A673 (cell line): ENCODE measurements at regions of chr12 and their contacts with region 1.

Region 1: DNA sequence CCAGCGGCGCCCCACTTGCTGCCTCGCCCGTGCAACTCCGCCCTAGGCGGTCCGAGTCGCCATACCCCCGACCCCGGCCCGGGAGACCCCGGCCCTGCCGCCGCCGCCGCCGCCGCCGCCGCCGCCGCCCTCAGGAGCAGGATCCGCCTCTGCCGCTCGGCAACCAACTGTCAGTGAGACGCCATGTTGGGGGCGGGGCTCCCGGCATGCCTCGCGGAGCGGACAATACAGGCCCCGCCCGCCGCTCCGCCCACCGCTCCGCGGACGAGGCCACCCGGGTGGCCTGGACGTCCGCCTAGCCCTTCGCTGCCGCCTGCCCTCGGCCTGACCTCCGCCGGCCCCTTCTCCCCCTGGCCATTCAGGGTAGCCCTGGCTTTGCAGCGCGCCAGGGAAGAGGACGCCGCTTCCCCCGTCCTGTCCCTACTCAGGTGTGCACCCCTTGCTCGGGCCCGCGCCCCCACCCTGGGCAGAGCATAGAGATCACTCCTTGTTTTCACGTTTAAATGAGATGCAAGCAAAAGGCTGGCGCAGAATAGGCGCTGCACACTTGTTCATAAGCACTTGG is at the start of gene HECTD4:
- DNase-seq: peak; percentile 94
- H3K4me3 ChIP-seq: peak within 1 kb of the TSS; percentile 98
- H3K27ac ChIP-seq: peak within 1 kb of the TSS; percentile 84
- H3K4me1 ChIP-seq: peaks cover 15% of the 10 kb centered on the region
- H3K27me3 ChIP-seq: no peaks in the 10 kb centered on the region
- CTCF ChIP-seq: no peak
- total RNA-seq, gene HECTD4: 45.3 and 52.1 TPM in 2 replicates

Region 2: DNA sequence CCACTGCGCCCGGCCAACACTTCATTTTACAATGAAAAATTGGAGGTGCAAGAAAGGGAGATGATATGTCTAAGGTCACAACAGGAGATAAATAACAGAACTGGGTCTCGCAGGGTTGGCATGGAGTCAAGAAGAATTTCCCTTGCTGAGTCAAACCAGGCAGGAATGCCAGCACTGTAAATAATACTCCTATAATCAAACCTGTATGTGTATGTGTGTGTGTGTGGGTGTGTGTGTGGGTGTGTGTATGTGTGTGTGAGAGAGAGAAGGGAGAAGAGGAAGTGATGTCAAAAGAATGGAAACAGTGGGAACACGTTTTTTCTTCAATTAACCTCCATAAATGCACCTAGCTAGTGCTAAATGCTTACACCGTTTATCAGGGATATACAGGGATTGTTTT is 439.8 kb before region 1 on chr12:
- CTCF ChIA-PET with region 1: interaction called, 11 read pairs
- POLR2A ChIA-PET with region 1: no interaction called
- intact Hi-C with region 1: no loop called
- DNase-seq: no peak
- H3K4me3 ChIP-seq: no peak overlapping the region
- H3K27ac ChIP-seq: no peak overlapping the region
- H3K4me1 ChIP-seq: no peaks in the 10 kb centered on the region
- H3K27me3 ChIP-seq: no peaks in the 10 kb centered on the region
- CTCF ChIP-seq: no peak

Region 3: DNA sequence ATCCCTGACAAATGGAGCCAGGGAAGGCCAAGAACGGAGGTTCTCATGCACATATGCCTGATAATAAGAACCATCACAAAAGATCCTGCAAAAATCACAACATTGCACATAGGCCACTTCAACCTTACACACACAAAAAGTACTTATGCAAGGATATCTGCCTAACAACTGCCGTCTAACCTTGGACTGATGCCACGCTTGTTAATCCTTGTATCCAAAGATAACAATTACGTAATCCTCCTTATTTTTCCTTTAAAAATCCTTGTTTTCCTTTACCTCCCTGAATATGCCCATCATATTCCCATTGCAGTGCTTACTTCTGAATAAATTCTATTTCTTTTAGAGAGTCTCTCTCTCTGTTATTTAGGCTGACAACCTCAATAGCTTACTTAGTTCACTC is 428.9 kb before region 1 on chr12:
- CTCF ChIA-PET with region 1: no interaction called
- POLR2A ChIA-PET with region 1: no interaction called
- intact Hi-C with region 1: loop called (anchors 5 kb)
- DNase-seq: no peak
- H3K4me3 ChIP-seq: no peak overlapping the region
- H3K27ac ChIP-seq: no peak overlapping the region
- H3K4me1 ChIP-seq: no peaks in the 10 kb centered on the region
- H3K27me3 ChIP-seq: no peaks in the 10 kb centered on the region
- CTCF ChIP-seq: no peak

Region 4: GRCh38 chr12:112012775-112013600 is 369.3 kb before region 1 on chr12 and contains the starts of genes ERP29 and TMEM116:
- CTCF ChIA-PET with region 1: no interaction called
- POLR2A ChIA-PET with region 1: no interaction called
- intact Hi-C with region 1: loop called (anchors 10 kb)
- DNase-seq: peak; percentile 99
- H3K4me3 ChIP-seq: peak within 1 kb of the TSS; percentile 82
- H3K27ac ChIP-seq: peak within 1 kb of the TSS; percentile 96
- H3K4me1 ChIP-seq: peaks cover 16% of the 10 kb centered on the region
- H3K27me3 ChIP-seq: no peaks in the 10 kb centered on the region
- CTCF ChIP-seq: peak; percentile 55
- total RNA-seq, gene ERP29: 109 and 116 TPM in 2 replicates
- total RNA-seq, gene TMEM116: 12.0 and 13.6 TPM in 2 replicates

Region 5: DNA sequence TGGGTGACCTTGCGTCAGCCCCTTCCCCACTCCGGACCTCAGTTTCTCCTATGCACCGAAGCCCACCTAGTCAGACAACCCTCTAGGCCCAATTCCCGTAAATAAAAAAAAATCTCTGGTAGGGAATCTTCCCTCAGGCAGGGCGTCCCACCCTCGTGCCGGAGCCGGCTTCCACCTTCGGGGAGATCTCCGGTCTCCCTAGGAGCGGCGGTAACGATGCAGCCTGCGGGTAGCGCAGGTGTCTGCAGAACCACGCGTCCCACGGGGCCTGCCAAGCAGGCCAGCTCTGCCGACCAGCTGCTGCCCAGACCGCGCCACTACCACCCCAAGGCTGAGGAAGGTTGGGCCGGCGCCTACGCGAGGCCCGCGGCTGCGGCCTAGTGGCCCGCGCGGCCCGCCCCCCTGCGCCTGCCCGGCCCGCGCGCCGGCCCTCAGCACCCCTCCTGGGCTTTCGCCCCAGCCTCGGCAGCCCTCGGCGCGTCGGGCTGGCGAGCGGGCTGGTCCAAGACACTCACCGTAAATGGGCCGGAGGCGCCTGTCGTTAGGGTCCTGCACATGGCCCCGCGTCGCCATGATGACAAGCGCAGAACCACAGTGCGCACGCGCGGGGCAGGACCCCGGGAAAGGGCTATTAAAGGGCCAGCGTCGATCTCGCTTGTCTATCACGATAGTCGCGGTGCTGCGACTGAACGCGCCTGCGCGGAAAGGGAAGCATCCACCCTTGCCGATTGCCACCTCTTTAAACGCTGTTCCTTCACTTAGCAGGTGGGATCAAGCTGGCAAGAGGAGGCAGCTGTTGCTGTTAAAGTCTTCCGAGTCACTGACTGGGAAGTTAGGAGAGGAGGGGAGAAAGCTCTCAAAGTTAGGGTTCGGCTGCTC is 273.9 kb before region 1 on chr12 and contains the start of gene NAA25:
- CTCF ChIA-PET with region 1: no interaction called
- POLR2A ChIA-PET with region 1: interaction called, 10 read pairs
- intact Hi-C with region 1: loop called (anchors 5 kb)
- DNase-seq: peak; percentile 91
- H3K4me3 ChIP-seq: peak within 1 kb of the TSS; percentile 94
- H3K27ac ChIP-seq: peak within 1 kb of the TSS; percentile 96
- H3K4me1 ChIP-seq: peaks cover 24% of the 10 kb centered on the region
- H3K27me3 ChIP-seq: no peaks in the 10 kb centered on the region
- CTCF ChIP-seq: no peak
- total RNA-seq, gene NAA25: 67.4 and 70.5 TPM in 2 replicates

Region 6: DNA sequence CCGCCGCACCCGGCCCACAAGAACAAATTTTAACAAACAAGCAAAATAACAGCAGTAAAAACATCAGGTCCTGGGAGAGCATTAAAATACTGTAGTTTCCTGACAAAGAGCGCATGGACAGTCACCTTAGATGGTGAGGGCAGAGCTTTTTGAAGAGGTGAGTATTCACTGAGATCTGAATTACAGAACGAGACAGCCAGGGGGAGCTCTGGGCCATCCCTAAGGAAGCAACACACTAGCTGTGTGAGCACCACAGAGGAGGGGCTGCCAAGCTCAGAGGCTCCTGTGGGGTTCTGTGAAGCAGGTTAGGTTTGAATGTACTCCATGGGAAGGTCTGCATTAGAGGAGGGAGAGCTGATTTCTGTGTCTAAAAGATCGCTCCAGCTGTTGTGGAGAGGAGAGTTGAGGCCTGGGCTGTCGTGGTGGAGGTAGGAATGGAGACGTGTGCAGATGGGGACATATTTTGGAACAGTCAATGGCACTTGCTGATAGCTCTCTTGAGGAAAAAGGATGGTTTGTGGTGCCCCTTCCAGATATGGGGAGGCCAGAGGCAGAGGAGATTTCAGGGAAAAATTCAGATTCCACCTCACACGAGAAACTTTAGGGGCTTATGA is 184.1 kb before region 1 on chr12:
- CTCF ChIA-PET with region 1: interaction called, 33 read pairs
- POLR2A ChIA-PET with region 1: no interaction called
- intact Hi-C with region 1: loop called (anchors 1 kb)
- DNase-seq: peak; percentile 76
- H3K4me3 ChIP-seq: no peak overlapping the region
- H3K27ac ChIP-seq: no peak overlapping the region
- H3K4me1 ChIP-seq: no peaks in the 10 kb centered on the region
- H3K27me3 ChIP-seq: no peaks in the 10 kb centered on the region
- CTCF ChIP-seq: peak; percentile 76

Region 7: GRCh38 chr12:112243255-112244110 is 138.8 kb before region 1 on chr12:
- CTCF ChIA-PET with region 1: no interaction called
- POLR2A ChIA-PET with region 1: no interaction called
- intact Hi-C with region 1: no loop called
- DNase-seq: no peak
- H3K4me3 ChIP-seq: no peak overlapping the region
- H3K27ac ChIP-seq: no peak overlapping the region
- H3K4me1 ChIP-seq: no peaks in the 10 kb centered on the region
- H3K27me3 ChIP-seq: no peaks in the 10 kb centered on the region
- CTCF ChIP-seq: no peak

Region 8: DNA sequence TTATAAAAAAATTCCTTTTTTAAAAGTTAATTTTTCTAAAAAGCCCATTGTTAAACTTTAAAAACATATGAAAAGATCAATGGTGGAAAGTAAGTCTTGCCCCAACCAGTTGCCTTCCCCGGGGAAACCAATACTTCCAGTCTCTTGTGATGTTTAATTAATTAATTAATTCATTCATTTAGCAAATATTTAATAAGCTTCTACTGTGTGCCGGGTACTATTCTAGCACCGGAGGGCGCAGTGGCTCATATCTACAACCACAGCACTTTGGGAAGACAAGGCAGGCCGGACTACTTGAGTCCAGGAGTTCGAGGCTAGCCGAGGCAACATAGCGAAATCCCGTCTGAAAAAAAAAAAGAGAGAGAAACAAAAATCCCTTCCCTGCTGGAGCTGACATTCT is 87.5 kb before region 1 on chr12:
- CTCF ChIA-PET with region 1: no interaction called
- POLR2A ChIA-PET with region 1: no interaction called
- intact Hi-C with region 1: loop called (anchors 10 kb)
- DNase-seq: peak; percentile 32
- H3K4me3 ChIP-seq: no peak overlapping the region
- H3K27ac ChIP-seq: no peak overlapping the region
- H3K4me1 ChIP-seq: no peaks in the 10 kb centered on the region
- H3K27me3 ChIP-seq: no peaks in the 10 kb centered on the region
- CTCF ChIP-seq: peak; percentile 44